B cell (primary cell): ENCODE measurements at regions of chrX and their contacts with region 1.

Region 1: GRCh38 chrX:19887911-19888879 is 795 bp upstream of the SH3KBP1 start:
- DNase-seq: peak; percentile 72
- ATAC-seq: peak; percentile 31
- H3K4me3 ChIP-seq: peak overlapping the region in 4 of 5 experiments; percentile 55 to 64 (median 60)
- H3K4me3 Mint-ChIP-seq: peak overlapping the region; percentile 77
- H3K27ac ChIP-seq: peak overlapping the region; percentile 68 to 76
- H3K27ac Mint-ChIP-seq: peak overlapping the region; percentile 90
- H3K4me1 ChIP-seq: peaks cover 18 to 39% of the 10 kb centered on the region in 2 donors
- H3K4me1 Mint-ChIP-seq: peaks cover 34% of the 10 kb centered on the region
- H3K27me3 ChIP-seq: no peaks in the 10 kb centered on the region
- H3K27me3 Mint-ChIP-seq: no peaks in the 10 kb centered on the region
- CTCF ChIP-seq: peak; percentile 29

Region 2: GRCh38 chrX:19372170-19372546 is 516.0 kb before region 1 on chrX:
- CTCF ChIA-PET with region 1: no interaction called
- POLR2A ChIA-PET with region 1: no interaction called
- intact Hi-C with region 1: loop called (anchors 5 kb)
- DNase-seq: peak; percentile 66
- ATAC-seq: peak; percentile 64
- H3K4me3 ChIP-seq: peak overlapping the region; percentile 39 to 63 (median 49)
- H3K4me3 Mint-ChIP-seq: peak overlapping the region; percentile 88
- H3K27ac ChIP-seq: no peak overlapping the region
- H3K27ac Mint-ChIP-seq: no peak overlapping the region
- H3K4me1 ChIP-seq: peaks cover 0 to 5% of the 10 kb centered on the region in 2 donors
- H3K4me1 Mint-ChIP-seq: peaks cover 5% of the 10 kb centered on the region
- H3K27me3 ChIP-seq: no peaks in the 10 kb centered on the region
- H3K27me3 Mint-ChIP-seq: no peaks in the 10 kb centered on the region
- CTCF ChIP-seq: peak; percentile 74

Region 3: GRCh38 chrX:19721726-19722370 is 166.3 kb before region 1 on chrX:
- CTCF ChIA-PET with region 1: no interaction called
- POLR2A ChIA-PET with region 1: no interaction called
- intact Hi-C with region 1: no loop called
- DNase-seq: no peak
- ATAC-seq: no peak
- H3K4me3 ChIP-seq: no peak overlapping the region
- H3K4me3 Mint-ChIP-seq: no peak overlapping the region
- H3K27ac ChIP-seq: no peak overlapping the region
- H3K27ac Mint-ChIP-seq: no peak overlapping the region
- H3K4me1 ChIP-seq: peaks cover 7 to 19% of the 10 kb centered on the region in 2 donors
- H3K4me1 Mint-ChIP-seq: peaks cover 24% of the 10 kb centered on the region
- H3K27me3 ChIP-seq: no peaks in the 10 kb centered on the region
- H3K27me3 Mint-ChIP-seq: no peaks in the 10 kb centered on the region
- CTCF ChIP-seq: no peak

Region 4: GRCh38 chrX:19739683-19740082 is 148.5 kb before region 1 on chrX:
- CTCF ChIA-PET with region 1: interaction called, 35 read pairs
- POLR2A ChIA-PET with region 1: interaction called, 3 read pairs
- intact Hi-C with region 1: loop called (anchors 1 kb)
- DNase-seq: peak; percentile 65
- ATAC-seq: peak; percentile 49
- H3K4me3 ChIP-seq: no peak overlapping the region
- H3K4me3 Mint-ChIP-seq: no peak overlapping the region
- H3K27ac ChIP-seq: no peak overlapping the region
- H3K27ac Mint-ChIP-seq: peak overlapping the region; percentile 73
- H3K4me1 ChIP-seq: peaks cover 12 to 17% of the 10 kb centered on the region in 2 donors
- H3K4me1 Mint-ChIP-seq: peaks cover 45% of the 10 kb centered on the region
- H3K27me3 ChIP-seq: no peaks in the 10 kb centered on the region
- H3K27me3 Mint-ChIP-seq: no peaks in the 10 kb centered on the region
- CTCF ChIP-seq: peak; percentile 74

Region 5: DNA sequence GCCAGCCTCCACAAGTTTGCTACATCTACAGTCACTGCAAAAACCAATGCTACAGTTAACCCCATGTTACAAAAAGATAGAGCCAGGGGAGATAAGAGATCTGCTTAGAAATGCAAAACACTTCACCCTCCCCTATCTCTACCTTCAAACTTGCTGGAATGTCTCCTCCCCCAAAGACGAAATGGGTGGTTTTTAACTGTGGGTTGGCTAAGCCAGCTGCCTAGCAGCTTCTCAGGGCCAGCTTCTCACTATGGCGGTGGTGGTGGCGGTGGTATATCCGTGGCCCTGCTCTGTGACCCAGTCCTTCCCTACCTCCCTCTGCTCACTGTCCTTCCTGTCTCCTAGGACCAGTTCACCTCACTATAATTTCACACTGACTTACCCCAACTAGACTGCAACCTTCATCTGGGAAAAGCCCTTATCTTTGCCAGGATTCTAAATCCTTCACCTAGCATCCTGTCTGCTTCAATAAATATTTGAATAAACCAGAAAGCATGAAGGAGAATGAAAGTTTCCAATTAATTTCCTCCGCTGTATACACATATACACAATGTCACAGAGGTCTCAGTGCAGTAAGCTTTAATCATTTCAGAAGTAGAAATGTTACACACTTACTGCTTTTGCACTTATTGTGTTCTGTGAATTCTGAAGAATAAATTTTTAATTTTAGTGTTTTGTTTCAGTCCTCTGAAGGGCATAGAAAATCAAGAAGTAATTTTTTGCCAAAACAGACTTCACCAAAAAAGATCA is 47.1 kb before region 1 on chrX:
- CTCF ChIA-PET with region 1: interaction called, 4 read pairs
- POLR2A ChIA-PET with region 1: no interaction called
- intact Hi-C with region 1: loop called (anchors 2 kb)
- DNase-seq: peak; percentile 37
- ATAC-seq: peak; percentile 55
- H3K4me3 ChIP-seq: no peak overlapping the region
- H3K4me3 Mint-ChIP-seq: peak overlapping the region; percentile 48
- H3K27ac ChIP-seq: peak overlapping the region; percentile 54 to 66
- H3K27ac Mint-ChIP-seq: peak overlapping the region; percentile 74
- H3K4me1 ChIP-seq: peaks cover 25 to 49% of the 10 kb centered on the region in 2 donors
- H3K4me1 Mint-ChIP-seq: peaks cover 60% of the 10 kb centered on the region
- H3K27me3 ChIP-seq: no peaks in the 10 kb centered on the region
- H3K27me3 Mint-ChIP-seq: no peaks in the 10 kb centered on the region
- CTCF ChIP-seq: no peak

Region 6: GRCh38 chrX:19875050-19875431 is 13.2 kb before region 1 on chrX:
- CTCF ChIA-PET with region 1: interaction called, 4 read pairs
- POLR2A ChIA-PET with region 1: interaction called, 4 read pairs
- intact Hi-C with region 1: loop called (anchors 2 kb)
- DNase-seq: peak; percentile 76
- ATAC-seq: peak; percentile 80
- H3K4me3 ChIP-seq: peak overlapping the region in 4 of 5 experiments; percentile 30 to 39 (median 32)
- H3K4me3 Mint-ChIP-seq: peak overlapping the region; percentile 74
- H3K27ac ChIP-seq: peak overlapping the region; percentile 26 to 83
- H3K27ac Mint-ChIP-seq: peak overlapping the region; percentile 90
- H3K4me1 ChIP-seq: peaks cover 68 to 75% of the 10 kb centered on the region in 2 donors
- H3K4me1 Mint-ChIP-seq: peaks cover 72% of the 10 kb centered on the region
- H3K27me3 ChIP-seq: no peaks in the 10 kb centered on the region
- H3K27me3 Mint-ChIP-seq: no peaks in the 10 kb centered on the region
- CTCF ChIP-seq: no peak

Region 7: GRCh38 chrX:19924285-19924684 is 36.1 kb after region 1 on chrX:
- CTCF ChIA-PET with region 1: no interaction called
- POLR2A ChIA-PET with region 1: no interaction called
- intact Hi-C with region 1: no loop called
- DNase-seq: no peak
- ATAC-seq: no peak
- H3K4me3 ChIP-seq: no peak overlapping the region
- H3K4me3 Mint-ChIP-seq: no peak overlapping the region
- H3K27ac ChIP-seq: no peak overlapping the region
- H3K27ac Mint-ChIP-seq: no peak overlapping the region
- H3K4me1 ChIP-seq: no peaks in the 10 kb centered on the region
- H3K4me1 Mint-ChIP-seq: no peaks in the 10 kb centered on the region
- H3K27me3 ChIP-seq: no peaks in the 10 kb centered on the region
- H3K27me3 Mint-ChIP-seq: no peaks in the 10 kb centered on the region
- CTCF ChIP-seq: no peak